BJ (cell line): ENCODE measurements at regions of chr3 and their contacts with region 1.

Region 1: GRCh38 chr3:68876112-68876713 is 56.1 kb downstream of the TAFA4 start:
- DNase-seq: peak; percentile 15
- H3K4me3 ChIP-seq: no peak overlapping the region
- H3K27me3 ChIP-seq: no peaks in the 10 kb centered on the region; the same call in 1 of the 2 replicates
- CTCF ChIP-seq: peak; percentile 84

Region 2: GRCh38 chr3:68866157-68866556 is 10.1 kb before region 1 on chr3:
- CTCF ChIA-PET with region 1: interaction called, 20 read pairs
- POLR2A ChIA-PET with region 1: no interaction called
- DNase-seq: no peak
- H3K4me3 ChIP-seq: no peak overlapping the region
- H3K27me3 ChIP-seq: no peaks in the 10 kb centered on the region
- CTCF ChIP-seq: no peak

Region 3: GRCh38 chr3:68893600-68894239 is 17.5 kb after region 1 on chr3:
- CTCF ChIA-PET with region 1: interaction called, 21 read pairs
- POLR2A ChIA-PET with region 1: no interaction called
- DNase-seq: no peak
- H3K4me3 ChIP-seq: no peak overlapping the region
- H3K27me3 ChIP-seq: no peaks in the 10 kb centered on the region
- CTCF ChIP-seq: peak; percentile 34; the same call in 1 of the 2 replicates